Psoas muscle (tissue), 8 donors: ENCODE measurements at regions of chr2 and their contacts with region 1.

Region 1: DNA sequence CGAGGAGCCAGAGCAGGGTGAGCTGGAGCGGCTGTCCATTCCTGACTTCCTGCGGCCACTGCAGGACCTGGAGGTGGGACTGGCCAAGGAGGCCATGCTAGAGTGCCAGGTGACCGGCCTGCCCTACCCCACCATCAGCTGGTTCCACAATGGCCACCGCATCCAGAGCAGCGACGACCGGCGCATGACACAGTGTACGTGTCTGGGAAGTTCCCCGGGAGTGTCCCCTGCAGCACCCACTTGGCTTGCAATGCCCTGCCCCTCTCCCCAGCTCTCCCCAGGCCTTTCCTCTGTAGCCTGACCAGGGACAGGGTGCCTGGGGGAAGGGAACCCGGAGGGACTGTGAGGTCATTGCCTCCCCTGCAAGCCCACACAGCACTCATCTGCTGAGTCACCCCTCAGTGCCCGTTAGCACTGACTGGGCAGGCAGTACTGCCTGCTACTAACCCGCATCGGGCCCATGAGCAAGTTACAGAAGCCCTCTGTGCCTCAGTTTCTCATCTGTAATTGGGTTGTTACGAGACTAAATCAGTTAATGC is 29.4 kb upstream of the GMPPA start:
- DNase-seq: no peak
- ATAC-seq: peak; percentile 30 to 65 (median 48)
- H3K4me3 ChIP-seq: no peak overlapping the region
- H3K27ac ChIP-seq: peak overlapping the region; percentile 5
- H3K4me1 ChIP-seq: no peaks in the 10 kb centered on the region
- H3K27me3 ChIP-seq: no peaks in the 10 kb centered on the region
- CTCF ChIP-seq: no peak

Region 2: DNA sequence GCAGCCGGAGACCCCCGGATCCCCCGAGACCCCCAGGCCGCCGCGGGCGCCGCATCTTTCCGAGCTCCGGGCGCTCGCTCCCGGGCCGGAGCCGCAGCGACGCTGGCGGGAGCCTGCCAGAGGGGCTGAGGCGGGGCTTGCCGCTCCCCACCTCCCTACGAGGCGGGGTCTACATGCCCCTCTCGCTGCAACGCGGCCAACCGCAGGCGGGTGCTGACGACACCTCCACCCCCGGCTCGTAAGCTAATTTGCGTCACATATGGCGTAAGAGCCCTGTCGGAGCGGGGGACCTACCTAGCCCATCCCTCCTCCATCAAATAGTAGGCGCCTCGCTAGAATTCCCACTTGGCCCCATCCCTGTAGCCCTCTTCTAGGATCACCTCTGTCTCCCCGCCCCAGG is 160.0 kb before region 1 on chr2 and contains the start of gene PTPRN:
- intact Hi-C with region 1: no loop called
- DNase-seq: no peak
- ATAC-seq: no peak
- H3K4me3 ChIP-seq: no peak within 1 kb of the TSS
- H3K27ac ChIP-seq: no peak within 1 kb of the TSS
- H3K4me1 ChIP-seq: no peaks in the 10 kb centered on the region
- H3K27me3 ChIP-seq: peaks cover 0 to 79% (median 6%) of the 10 kb centered on the region in 3 donors
- CTCF ChIP-seq: no peak
- total RNA-seq, gene PTPRN: 0.91 to 1.1 TPM in 2 of 4 donors, not detected in the others

Region 3: DNA sequence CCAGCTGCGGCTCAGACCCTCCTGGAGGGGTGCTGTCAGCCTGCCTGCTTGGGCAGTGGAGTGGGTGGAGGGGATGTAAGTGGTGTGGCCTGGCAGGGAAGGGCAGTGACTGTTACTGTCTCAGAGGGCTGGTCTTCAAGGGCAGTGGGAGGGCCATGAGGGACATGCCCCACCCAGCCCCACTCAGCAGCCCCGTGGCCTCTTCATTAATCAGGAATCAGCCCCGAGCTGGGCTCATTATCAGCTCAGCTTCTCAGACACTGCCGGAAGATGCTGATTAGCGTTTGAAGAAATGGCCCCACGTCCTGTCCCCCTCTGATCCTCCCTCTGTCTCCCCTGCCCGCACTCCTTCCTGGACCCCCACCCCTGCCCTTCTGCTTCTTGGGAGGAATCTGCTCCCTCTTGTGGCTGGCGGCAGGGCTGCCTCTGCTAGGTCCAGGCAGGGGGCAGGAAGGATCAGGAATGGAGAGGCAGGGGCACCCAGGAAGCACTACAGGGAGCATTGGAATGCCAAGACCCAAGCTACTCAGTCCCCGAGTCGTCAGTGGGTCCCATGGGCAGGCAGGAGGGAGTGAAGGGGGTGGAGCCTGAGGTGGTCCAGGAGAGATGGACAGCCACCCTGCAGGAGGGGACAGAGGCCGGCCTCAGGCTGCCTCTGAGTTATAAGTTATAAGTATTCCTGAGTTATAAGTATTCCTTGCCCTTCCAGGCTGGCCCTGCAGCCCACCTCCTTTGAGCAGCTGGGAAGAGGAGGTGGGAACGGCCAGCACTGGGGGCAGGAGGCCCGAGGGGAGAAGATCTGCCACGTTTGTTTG is 52.0 kb after region 1 on chr2:
- intact Hi-C with region 1: loop called in 1 of 2 experiments (anchors 5 kb)
- DNase-seq: no peak
- ATAC-seq: peak; percentile 28 to 46 (median 36)
- H3K4me3 ChIP-seq: no peak overlapping the region
- H3K27ac ChIP-seq: no peak overlapping the region
- H3K4me1 ChIP-seq: no peaks in the 10 kb centered on the region
- H3K27me3 ChIP-seq: peaks cover 0 to 29% (median 10%) of the 10 kb centered on the region in 3 donors
- CTCF ChIP-seq: peak; percentile 39